ENCODE measurements at regions of chr7 and their contacts with region 1.

Region 1: DNA sequence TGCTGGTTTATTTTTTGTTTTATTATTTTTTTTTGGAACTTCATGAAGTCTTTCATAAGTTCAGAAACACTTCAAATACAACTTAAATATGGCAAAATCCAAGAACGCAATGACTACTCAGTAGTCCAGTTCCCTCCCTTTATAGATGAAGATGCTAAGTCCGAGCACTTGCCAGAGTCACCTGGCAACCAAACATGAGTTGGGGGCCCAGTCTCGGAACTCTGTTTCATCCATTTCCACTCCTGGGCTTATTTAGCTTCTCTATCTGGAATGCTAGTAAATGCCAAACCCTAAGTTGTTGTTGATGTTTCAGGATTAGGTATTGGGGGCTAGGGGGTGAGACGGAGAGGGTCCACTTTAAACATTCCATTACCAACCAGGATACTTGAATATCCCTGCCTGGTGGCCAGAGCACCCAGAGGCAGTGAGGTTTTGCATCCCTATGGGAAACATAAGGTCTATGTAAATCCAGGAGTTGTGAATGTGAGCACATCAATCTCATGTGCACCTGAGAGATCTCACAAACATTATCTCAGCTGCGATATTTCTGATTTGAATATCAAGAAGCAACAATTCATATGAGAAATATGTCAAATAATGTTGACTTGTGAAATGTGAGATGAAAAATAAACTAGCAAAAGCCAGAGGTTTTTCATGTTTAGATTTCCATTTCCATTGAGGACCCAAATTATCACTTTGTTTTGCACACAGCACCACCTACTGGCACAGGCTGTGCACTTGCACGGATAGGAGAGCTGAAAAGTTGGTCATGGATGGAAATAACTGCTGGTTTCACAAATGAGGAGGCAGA is 129.3 kb downstream of the PKD1L1 start:
- DNase-seq: peak; percentile 78
- H3K4me3 ChIP-seq: no peak overlapping the region
- H3K27ac ChIP-seq: no peak overlapping the region
- H3K4me1 ChIP-seq: no peaks in the 10 kb centered on the region
- H3K27me3 ChIP-seq: no peaks in the 10 kb centered on the region
- CTCF ChIP-seq: peak; percentile 91

Region 2: DNA sequence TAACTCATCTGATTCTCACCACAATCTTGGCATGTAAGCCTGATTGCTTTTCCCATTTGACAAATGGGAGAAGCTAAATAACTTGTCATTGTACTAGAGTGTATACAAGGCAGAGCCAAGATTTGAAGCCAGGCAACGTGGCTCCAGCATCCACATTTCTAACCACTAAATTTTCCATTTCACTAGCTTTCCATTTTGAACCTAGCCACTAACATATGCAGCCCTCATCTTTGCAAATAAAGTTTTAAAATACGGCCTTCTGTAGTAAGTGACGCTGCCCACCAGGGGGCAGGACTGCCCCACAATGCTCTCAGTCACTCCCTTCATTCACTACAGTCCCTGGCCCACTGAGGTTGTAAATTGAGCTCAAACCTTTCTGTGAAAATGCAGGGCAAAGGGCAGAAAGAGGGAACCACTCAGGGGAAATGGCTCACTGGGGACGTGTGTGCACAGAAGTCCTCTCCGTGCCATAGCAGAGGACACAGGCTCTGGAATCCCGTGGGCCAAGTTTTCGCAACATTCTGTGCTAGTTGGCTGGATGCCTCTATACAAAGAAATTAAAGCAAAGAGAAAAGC is 552.8 kb before region 1 on chr7:
- intact Hi-C with region 1: loop called (anchors 2 kb)
- DNase-seq: peak; percentile 80
- H3K4me3 ChIP-seq: no peak overlapping the region
- H3K27ac ChIP-seq: peak overlapping the region; percentile 69
- H3K4me1 ChIP-seq: no peaks in the 10 kb centered on the region
- H3K27me3 ChIP-seq: no peaks in the 10 kb centered on the region
- CTCF ChIP-seq: peak; percentile 88

Region 3: DNA sequence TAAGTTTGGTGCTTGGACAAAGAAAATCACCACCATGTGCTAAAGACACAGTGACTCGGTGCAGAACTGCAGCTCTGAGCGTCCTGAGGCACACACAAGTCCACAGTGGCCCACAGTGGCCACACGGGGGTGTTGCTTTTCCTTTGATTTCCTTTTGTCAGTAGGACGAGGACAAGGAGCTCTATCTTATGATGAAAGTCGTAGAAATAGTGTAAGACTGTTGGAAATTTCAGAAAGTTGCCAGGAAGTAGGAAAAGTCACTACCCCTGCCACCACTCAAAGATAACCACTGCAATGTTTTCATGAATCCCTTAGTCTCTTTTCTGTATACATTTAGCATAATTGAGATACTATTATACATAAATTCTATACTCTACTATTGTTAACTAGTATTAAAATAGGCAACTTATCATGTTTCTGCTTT is 383.1 kb before region 1 on chr7:
- intact Hi-C with region 1: loop called (anchors 5 kb)
- DNase-seq: peak; percentile 76
- H3K4me3 ChIP-seq: no peak overlapping the region
- H3K27ac ChIP-seq: no peak overlapping the region
- H3K4me1 ChIP-seq: no peaks in the 10 kb centered on the region
- H3K27me3 ChIP-seq: no peaks in the 10 kb centered on the region
- CTCF ChIP-seq: peak; percentile 70

Region 4: DNA sequence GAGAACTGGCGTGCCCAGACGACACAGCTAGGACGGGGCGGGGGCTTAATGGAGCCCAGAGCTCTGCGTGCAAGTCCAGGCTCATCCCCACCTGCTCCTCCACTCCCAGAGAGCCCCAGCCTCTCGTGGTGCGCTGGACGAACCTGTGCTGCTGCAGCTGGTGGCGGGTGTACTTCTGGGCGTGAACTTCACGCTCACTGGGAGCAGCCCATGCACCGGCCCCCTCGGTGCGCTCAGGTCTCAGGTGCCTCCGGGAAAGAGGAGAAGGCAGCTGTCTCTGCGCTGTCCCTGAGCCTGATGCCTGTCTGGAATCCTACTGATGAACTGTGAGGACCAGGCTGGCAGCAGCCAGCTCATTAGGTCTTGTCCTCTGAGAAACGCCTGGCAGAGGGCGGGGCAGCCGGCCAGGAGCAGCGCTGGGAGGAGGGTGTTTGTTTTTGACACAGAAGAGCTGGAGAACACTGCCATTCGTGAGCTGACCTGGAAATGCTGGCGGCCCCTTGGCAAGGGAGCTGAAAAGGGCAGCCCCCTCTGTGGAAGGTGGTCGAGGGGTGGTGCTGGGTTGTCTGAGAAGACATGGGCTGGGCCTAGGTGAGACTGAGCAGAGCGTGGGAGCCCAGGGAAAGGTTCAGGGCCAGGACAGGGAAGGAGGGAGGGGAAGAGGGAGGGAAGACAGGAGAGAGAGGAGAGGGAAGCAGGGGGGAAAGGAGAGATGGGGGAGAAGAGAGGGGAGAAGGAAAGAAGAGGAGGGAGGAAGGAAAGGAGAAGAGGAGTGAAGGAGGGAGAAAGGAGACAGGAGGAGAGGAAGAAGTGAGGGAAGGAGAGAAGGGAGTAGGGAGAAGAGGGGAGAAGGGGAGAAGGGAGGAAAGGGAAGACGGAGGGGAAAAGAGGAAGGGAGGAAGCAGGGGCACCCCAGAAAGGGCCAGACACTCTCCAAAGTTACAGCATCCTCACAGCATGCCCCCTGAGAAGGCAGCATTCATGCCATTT is 183.6 kb before region 1 on chr7:
- intact Hi-C with region 1: loop called (anchors 10 kb)
- DNase-seq: peak; percentile 62
- H3K4me3 ChIP-seq: no peak overlapping the region
- H3K27ac ChIP-seq: no peak overlapping the region
- H3K4me1 ChIP-seq: no peaks in the 10 kb centered on the region
- H3K27me3 ChIP-seq: no peaks in the 10 kb centered on the region
- CTCF ChIP-seq: no peak

Region 5: GRCh38 chr7:47924270-47924669 is 105.3 kb after region 1 on chr7:
- intact Hi-C with region 1: no loop called
- DNase-seq: no peak
- H3K4me3 ChIP-seq: no peak overlapping the region
- H3K27ac ChIP-seq: no peak overlapping the region
- H3K4me1 ChIP-seq: no peaks in the 10 kb centered on the region
- H3K27me3 ChIP-seq: no peaks in the 10 kb centered on the region
- CTCF ChIP-seq: no peak